CD14-positive monocyte (primary cell): ENCODE measurements at regions of chr21 and their contacts with region 1.

Region 1: GRCh38 chr21:34004974-34005373 is 68.4 kb upstream of the MRPS6 start:
- DNase-seq: no peak
- H3K4me3 ChIP-seq: no peak overlapping the region
- H3K4me3 Mint-ChIP-seq: no peak overlapping the region
- H3K27ac ChIP-seq: no peak overlapping the region
- H3K27ac Mint-ChIP-seq: no peak overlapping the region
- H3K4me1 ChIP-seq: no peaks in the 10 kb centered on the region
- H3K4me1 Mint-ChIP-seq: no peaks in the 10 kb centered on the region
- H3K27me3 ChIP-seq: no peaks in the 10 kb centered on the region
- H3K27me3 Mint-ChIP-seq: peaks cover 1% of the 10 kb centered on the region in 3 donors
- CTCF ChIP-seq: no peak

Region 2: DNA sequence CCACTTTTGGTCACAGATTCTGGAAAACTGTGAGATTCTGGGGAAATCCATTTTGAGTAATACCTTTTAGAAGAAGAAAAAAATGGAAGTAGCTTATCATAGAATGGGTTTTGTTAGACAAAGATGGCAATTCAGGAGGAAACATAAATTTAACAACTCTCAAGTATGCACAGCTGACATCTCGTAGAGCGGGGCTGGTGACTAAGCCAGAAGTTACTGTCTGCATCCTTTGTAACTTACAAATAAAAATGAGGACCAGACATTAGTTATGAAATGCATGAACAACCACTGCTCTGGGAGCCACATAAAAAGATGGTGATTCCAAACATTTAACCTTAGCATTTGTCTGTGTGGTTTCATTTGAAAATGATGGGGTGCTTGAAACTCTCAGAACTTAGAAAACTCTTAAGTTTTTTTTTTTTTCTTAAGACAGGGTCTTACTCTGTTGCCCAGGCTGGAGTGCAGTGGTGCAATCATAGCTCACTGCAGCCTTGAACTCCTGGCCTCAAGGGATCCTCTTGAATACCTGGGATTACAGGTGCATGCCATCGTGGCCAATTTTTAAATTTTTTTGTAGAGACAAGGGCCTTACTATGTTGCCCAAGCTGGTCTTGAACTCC is 40.2 kb before region 1 on chr21:
- intact Hi-C with region 1: no loop called
- DNase-seq: no peak
- H3K4me3 ChIP-seq: no peak overlapping the region
- H3K4me3 Mint-ChIP-seq: no peak overlapping the region
- H3K27ac ChIP-seq: no peak overlapping the region
- H3K27ac Mint-ChIP-seq: no peak overlapping the region
- H3K4me1 ChIP-seq: no peaks in the 10 kb centered on the region
- H3K4me1 Mint-ChIP-seq: peaks cover 6% of the 10 kb centered on the region
- H3K27me3 ChIP-seq: no peaks in the 10 kb centered on the region
- H3K27me3 Mint-ChIP-seq: peaks cover 2 to 8% (median 4%) of the 10 kb centered on the region in 3 donors
- CTCF ChIP-seq: no peak

Region 3: DNA sequence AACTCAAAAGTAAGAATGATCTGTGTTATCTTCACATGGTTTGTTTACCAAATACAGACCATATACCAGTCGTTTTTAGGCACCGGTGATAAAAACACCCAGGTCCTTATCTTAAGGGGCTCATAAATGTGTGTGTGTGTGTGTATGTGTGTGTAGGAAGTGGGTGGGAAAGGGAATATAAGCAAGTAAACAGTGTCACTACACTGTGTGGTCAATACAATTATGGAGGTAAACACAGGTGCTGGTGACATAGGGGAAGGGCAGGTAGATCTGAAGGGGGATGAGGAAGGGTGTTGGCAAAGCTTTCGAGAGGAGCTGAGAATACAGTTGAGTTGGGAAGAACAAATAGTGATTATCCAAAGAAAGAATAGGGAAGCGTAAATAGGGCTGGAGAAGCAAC is 49.3 kb after region 1 on chr21:
- intact Hi-C with region 1: loop called in 1 of 2 experiments (anchors 5 kb)
- DNase-seq: no peak
- H3K4me3 ChIP-seq: no peak overlapping the region
- H3K4me3 Mint-ChIP-seq: no peak overlapping the region
- H3K27ac ChIP-seq: no peak overlapping the region
- H3K27ac Mint-ChIP-seq: no peak overlapping the region
- H3K4me1 ChIP-seq: peaks cover 5% of the 10 kb centered on the region in 2 donors
- H3K4me1 Mint-ChIP-seq: peaks cover 6% of the 10 kb centered on the region
- H3K27me3 ChIP-seq: no peaks in the 10 kb centered on the region
- H3K27me3 Mint-ChIP-seq: peaks cover 2 to 6% (median 2%) of the 10 kb centered on the region in 3 donors
- CTCF ChIP-seq: no peak